Esophagus muscularis mucosa (tissue), 4 donors: ENCODE measurements at regions of chr1 and their contacts with region 1.

Region 1: DNA sequence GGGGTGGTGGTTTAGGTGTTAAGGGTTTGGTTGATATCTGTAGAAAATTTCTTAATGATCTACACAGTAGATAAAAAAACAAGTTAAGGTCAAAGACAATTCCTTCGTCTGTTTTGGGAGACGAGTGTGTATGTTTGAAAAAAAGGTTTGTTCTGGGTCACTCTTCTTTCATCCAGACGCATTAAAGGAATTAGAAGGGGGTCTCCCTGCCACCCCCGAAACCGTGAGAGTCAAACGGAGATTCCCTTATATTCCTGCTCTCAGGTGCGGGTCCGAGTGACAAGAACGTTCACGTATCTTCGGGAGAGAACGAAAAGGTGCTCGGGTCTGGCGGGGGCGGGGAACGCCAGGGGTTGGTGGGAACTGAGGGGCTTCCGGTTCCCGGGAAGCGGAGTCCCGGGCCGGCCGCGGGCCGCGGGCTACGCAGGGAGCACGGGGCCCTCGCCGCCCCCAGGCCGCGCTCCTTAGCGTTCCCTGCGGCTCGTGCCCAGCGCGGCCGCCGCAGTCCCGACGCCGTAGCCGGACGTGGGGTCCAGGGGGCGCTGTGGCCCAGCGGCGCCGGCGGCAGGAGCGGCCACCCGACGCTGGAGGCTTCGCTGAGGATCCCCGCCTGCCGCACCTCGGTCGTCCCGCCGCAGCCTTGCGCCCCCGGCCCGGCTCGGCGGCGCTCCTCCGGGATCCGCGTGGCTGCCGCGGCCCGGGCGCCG is at the start of gene ZFYVE9:
- DNase-seq: no peak
- H3K4me3 ChIP-seq: peak within 1 kb of the TSS; percentile 80 to 96 (median 96)
- H3K27ac ChIP-seq: peak within 1 kb of the TSS; percentile 98 to 99 (median 99)
- H3K4me1 ChIP-seq: peaks cover 23 to 57% (median 52%) of the 10 kb centered on the region in 4 donors
- H3K27me3 ChIP-seq: no peaks in the 10 kb centered on the region
- CTCF ChIP-seq: peak; percentile 73 to 86 (median 83)
- EP300 ChIP-seq: no peak
- POLR2A ChIP-seq: no peak
- total RNA-seq, gene ZFYVE9: 38.1 to 54.8 (median 40.9) TPM

Region 2: GRCh38 chr1:51661081-51661518 is 480.6 kb before region 1 on chr1:
- intact Hi-C with region 1: no loop called
- DNase-seq: no peak
- H3K4me3 ChIP-seq: no peak overlapping the region
- H3K27ac ChIP-seq: peak overlapping the region; percentile 18 to 53 (median 34)
- H3K4me1 ChIP-seq: peaks cover 35 to 52% (median 41%) of the 10 kb centered on the region in 4 donors
- H3K27me3 ChIP-seq: no peaks in the 10 kb centered on the region
- CTCF ChIP-seq: no peak
- EP300 ChIP-seq: no peak
- POLR2A ChIP-seq: no peak

Region 3: DNA sequence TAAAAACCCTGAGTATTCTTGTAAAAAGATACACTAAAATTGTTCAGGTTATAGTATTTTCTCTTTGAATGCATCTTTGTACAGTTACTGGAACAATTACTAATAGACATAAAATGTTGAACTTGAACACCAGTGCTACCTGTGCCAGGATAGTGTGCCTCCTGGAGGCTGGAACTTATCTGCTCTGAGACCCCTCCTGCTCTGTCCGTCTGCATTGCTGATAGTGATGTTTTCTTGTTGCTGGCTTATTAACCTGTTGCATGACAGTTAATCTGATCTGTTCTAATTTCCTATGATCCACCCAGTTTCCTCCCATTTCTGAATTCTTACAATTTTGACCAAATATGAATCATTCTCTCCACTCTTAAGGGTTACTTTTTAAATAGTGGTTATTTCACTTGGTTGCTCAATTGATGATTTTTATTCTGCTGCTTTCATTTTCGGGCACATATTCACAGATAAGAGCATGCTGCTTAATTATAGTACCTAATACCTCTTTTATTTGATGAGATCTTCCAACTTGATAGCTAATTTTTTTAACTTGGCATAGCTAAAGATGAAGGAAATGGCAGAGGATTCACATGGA is 123.0 kb after region 1 on chr1:
- intact Hi-C with region 1: loop called (anchors 5 kb)
- DNase-seq: no peak
- H3K4me3 ChIP-seq: no peak overlapping the region
- H3K27ac ChIP-seq: no peak overlapping the region
- H3K4me1 ChIP-seq: peaks cover 0 to 14% (median 10%) of the 10 kb centered on the region in 4 donors
- H3K27me3 ChIP-seq: no peaks in the 10 kb centered on the region
- CTCF ChIP-seq: peak; percentile 39 to 49 (median 40)
- EP300 ChIP-seq: no peak
- POLR2A ChIP-seq: no peak

Region 4: GRCh38 chr1:52460694-52461093 is 319.0 kb after region 1 on chr1:
- intact Hi-C with region 1: no loop called
- DNase-seq: no peak
- H3K4me3 ChIP-seq: no peak overlapping the region
- H3K27ac ChIP-seq: no peak overlapping the region
- H3K4me1 ChIP-seq: no peaks in the 10 kb centered on the region
- H3K27me3 ChIP-seq: no peaks in the 10 kb centered on the region
- CTCF ChIP-seq: no peak
- EP300 ChIP-seq: no peak
- POLR2A ChIP-seq: no peak